ENCODE measurements at regions of chr18 and their contacts with region 1.

Region 1: GRCh38 chr18:62714671-62715435 is 488 bp upstream of the PHLPP1 start:
- DNase-seq: peak; percentile 100
- ATAC-seq: peak; percentile 99

Region 2: DNA sequence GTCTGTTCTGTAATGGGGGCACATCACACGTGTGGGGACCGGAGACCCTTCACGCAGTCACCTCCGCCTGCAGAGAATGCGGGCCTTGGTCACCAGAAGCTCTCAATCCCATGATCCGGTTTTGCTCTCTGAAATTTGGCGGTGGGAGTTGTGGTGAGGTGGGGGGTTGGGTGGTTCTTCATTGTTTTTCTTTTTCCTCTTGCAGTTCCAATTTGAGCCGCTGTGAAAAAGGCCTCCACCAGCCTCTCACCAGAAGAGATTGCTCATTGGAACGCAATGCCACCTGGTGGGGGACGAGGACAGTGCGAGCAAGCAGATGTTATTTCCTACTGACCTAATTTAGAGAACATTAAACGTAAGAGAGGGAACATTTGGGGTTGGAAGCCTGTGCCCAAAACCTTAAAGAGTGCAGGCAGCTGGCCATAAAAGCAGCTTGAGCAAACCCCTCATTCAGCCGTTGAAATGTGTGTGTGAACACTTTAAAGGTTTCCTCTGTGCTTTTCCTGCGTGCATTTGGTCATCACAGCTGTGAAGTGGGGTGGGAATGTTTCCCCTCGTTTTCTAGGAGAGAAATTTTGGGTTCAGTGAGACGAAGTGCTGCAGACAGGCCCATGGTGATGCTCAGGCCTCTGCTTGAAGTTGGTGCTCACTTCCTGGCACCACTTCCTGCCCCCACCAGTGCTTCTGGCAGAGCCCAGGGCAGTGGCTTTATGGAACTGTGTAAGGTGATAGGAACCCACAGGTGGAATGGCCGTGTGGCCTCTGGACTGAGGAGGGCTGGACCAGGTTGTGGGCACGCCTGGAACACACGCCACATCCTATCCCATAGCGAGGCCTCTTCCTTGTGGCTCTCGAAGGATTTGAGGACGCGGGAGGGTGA is 130.4 kb before region 1 on chr18:
- intact Hi-C with region 1: loop called (anchors 5 kb)
- DNase-seq: peak; percentile 89
- ATAC-seq: peak; percentile 88

Region 3: DNA sequence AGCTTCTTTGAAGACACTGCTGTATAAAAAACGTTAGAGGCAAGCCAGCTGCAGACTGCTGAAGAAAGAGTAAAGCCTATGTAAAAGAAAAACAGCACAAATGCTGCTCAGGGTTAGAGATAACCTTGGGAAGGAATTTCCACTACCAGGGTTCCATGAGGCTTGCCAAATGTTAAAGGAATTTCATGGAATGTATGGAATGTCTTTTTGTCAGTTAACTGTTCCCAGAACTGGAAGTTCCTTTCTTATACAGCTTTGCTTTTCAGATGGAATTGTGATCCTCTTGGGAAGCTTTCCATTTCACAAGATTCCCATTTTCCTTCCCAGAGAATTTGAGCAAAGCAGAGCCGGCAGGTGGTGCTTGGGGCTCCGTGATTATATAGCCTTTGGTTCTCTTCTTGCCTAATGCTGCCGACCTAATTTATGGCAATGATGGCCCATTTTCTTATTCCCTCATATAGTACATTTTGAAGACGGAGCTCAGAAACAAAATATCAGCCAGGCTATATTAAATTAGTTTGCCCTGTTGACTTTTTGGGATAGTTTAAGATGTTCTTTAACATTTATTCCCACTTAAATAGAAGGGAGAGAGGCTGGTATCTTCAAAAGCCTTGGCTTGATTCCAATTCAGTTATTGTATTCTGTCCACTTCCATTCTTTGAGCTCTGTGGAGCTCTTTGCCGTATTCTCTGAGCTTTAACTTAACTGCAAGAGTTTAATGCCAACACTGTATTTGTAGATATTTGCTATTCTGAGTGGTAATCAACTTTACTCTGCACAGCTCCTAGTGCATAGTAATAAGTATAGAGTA is 162.8 kb after region 1 on chr18:
- intact Hi-C with region 1: loop called (anchors 5 kb)
- DNase-seq: no peak
- ATAC-seq: no peak

Region 4: GRCh38 chr18:62982600-62983251 is 267.9 kb after region 1 on chr18:
- intact Hi-C with region 1: loop called (anchors 1 kb)
- DNase-seq: no peak
- ATAC-seq: peak; percentile 80